CD8-positive, alpha-beta T cell (primary cell): ENCODE measurements at regions of chr7 and their contacts with region 1.

Region 1: DNA sequence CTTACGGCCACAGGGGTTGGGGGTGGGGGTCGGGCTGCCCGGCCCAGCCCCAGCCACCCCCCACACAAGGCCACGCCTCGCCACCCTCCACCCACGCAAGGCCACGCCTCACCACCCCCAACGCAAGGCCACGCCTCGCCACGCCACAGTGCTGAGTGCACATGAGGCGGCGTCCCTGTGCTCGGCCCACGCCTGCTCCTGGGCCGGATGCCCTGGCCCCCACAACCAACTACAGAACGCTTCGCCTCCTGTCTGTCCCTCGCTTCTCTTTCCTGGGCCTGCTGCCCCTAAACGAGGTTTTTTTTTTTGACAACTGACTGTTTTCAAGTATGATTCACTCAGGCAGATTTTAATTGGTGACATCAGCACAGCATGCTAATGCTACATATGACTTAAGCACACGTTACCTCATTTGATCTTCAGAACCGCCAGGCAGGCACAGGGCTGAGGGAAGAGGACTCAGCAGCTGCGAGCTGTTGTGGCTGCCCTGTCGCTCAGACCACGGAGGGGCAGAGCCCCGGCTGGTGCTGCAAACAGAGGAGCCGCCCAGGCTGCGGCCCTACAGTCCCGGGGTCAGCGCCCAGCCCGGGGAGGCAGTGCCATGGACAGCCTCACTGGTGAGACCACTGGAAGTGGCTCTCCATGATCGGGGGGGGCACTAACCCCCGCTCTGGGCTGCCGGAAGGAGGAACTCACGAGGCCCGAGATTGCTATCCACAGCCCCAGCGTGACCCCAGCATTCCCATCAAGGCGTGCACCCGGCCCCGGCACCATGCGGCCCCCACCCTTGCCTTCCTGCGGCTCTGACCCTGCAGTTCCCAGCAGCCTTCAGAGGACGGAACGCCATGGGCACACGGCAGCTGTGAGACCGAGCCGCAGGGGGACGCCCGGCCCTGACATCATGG is 212.9 kb downstream of the MAD1L1 start:
- DNase-seq: peak in 6 of 9 experiments; percentile 25 to 81 (median 64)
- ATAC-seq: peak; percentile 92
- H3K4me3 ChIP-seq: peak overlapping the region; percentile 19 to 26
- H3K4me3 Mint-ChIP-seq: peak overlapping the region; percentile 69
- H3K27ac ChIP-seq: peak overlapping the region in 1 of 2 experiments; percentile 18
- H3K27ac Mint-ChIP-seq: peak overlapping the region; percentile 81
- H3K4me1 ChIP-seq: peaks cover 19% of the 10 kb centered on the region
- H3K4me1 Mint-ChIP-seq: peaks cover 23% of the 10 kb centered on the region
- H3K27me3 ChIP-seq: no peaks in the 10 kb centered on the region
- H3K27me3 Mint-ChIP-seq: no peaks in the 10 kb centered on the region
- CTCF ChIP-seq: no peak

Region 2: DNA sequence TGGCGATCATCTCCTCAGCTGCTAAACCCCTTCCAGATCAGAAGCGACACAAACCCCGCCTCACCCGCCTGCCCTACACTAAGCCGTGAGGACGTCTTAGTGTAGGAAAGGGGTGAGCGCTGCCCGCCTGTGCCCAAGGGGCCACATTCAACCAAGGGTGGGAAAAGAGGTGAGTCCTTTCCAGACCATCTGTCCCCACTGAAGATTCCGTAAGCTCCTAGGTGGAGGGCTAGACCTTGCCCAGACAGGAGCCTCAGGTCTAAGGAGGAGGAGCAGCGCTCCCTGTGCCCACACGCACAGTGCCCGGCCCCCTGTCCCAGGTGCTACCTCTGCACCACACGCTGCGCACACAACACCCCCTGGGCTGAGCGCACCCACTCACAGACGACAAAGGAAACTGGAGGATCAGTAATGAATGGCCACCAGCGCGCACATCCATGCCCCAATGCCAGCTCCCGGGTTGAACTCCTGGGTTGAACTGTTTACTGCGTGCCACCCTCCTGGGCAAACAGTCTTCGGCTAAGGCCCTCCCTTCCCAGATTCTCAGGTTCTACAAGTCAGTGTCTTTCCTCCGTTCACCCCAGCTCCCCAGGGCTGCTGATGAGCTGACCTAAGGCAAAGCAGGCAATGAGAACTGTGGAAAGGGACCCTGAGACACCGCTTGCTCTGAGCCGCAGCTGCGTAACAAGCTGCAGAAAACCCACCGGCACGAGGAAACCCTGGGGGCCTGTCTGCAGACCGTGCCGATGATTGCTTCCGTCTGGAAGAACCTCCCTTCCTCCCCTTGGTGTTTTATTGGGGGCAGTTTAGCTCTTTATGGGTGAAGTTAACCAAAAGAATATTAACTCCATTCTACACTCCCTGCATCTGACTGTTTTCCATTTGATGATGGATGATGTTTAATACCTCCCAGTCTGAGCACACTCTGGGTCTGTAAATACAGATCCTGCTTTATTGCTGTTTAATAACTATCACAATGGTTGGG is 27.0 kb after region 1 on chr7:
- CTCF ChIA-PET with region 1: no interaction called
- POLR2A ChIA-PET with region 1: no interaction called
- intact Hi-C with region 1: no loop called
- DNase-seq: no peak
- ATAC-seq: no peak
- H3K4me3 ChIP-seq: no peak overlapping the region
- H3K4me3 Mint-ChIP-seq: no peak overlapping the region
- H3K27ac ChIP-seq: no peak overlapping the region
- H3K27ac Mint-ChIP-seq: no peak overlapping the region
- H3K4me1 ChIP-seq: peaks cover 24% of the 10 kb centered on the region
- H3K4me1 Mint-ChIP-seq: peaks cover 22% of the 10 kb centered on the region
- H3K27me3 ChIP-seq: no peaks in the 10 kb centered on the region
- H3K27me3 Mint-ChIP-seq: no peaks in the 10 kb centered on the region
- CTCF ChIP-seq: no peak

Region 3: GRCh38 chr7:2082139-2082998 is 62.5 kb after region 1 on chr7:
- CTCF ChIA-PET with region 1: no interaction called
- POLR2A ChIA-PET with region 1: no interaction called
- intact Hi-C with region 1: loop called in 1 of 2 experiments (anchors 5 kb)
- DNase-seq: no peak
- ATAC-seq: no peak
- H3K4me3 ChIP-seq: no peak overlapping the region
- H3K4me3 Mint-ChIP-seq: no peak overlapping the region
- H3K27ac ChIP-seq: no peak overlapping the region
- H3K27ac Mint-ChIP-seq: peak overlapping the region; percentile 61
- H3K4me1 ChIP-seq: peaks cover 31% of the 10 kb centered on the region
- H3K4me1 Mint-ChIP-seq: peaks cover 37% of the 10 kb centered on the region
- H3K27me3 ChIP-seq: no peaks in the 10 kb centered on the region
- H3K27me3 Mint-ChIP-seq: no peaks in the 10 kb centered on the region
- CTCF ChIP-seq: no peak